Mammary epithelial cell (primary cell): ENCODE measurements at regions of chr17 and their contacts with region 1.

Region 1: GRCh38 chr17:12591021-12591735 is 74.5 kb upstream of the MYOCD start:
- DNase-seq: no peak
- H3K4me3 ChIP-seq: no peak overlapping the region
- H3K27ac ChIP-seq: no peak overlapping the region
- H3K4me1 ChIP-seq: no peaks in the 10 kb centered on the region
- H3K27me3 ChIP-seq: no peaks in the 10 kb centered on the region
- CTCF ChIP-seq: no peak

Region 2: GRCh38 chr17:12472252-12473173 is 118.7 kb before region 1 on chr17:
- CTCF ChIA-PET with region 1: no interaction called
- dilution Hi-C with region 1: no loop called
- in situ Hi-C with region 1: no loop called
- intact Hi-C with region 1: no loop called
- DNase-seq: no peak
- H3K4me3 ChIP-seq: no peak overlapping the region
- H3K27ac ChIP-seq: no peak overlapping the region
- H3K4me1 ChIP-seq: no peaks in the 10 kb centered on the region
- H3K27me3 ChIP-seq: no peaks in the 10 kb centered on the region
- CTCF ChIP-seq: no peak

Region 3: DNA sequence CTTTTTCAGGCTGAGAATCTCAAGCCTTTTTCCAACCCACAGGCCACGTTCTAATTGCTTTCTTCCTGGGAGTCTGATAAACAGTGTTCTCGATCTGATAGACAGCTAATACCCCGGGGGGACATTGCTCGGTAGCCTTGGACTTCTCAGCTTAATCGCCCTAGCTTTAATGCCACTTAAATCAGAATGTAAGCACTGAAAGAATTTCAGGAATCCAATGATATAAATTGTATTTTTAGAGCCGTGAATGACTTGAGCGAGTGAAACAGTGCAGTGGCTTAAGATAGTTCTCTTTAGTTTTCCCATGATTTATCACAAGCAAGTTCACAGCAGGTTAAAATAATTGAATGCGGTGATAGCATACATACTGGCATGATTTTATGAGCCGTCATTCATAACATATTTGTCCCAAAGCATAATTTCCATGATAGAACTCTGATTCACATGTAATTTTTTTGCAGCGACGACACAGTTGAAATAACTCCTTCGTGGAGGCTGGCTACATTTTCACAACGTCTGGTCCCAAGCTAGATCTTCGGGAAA is 41.6 kb before region 1 on chr17:
- CTCF ChIA-PET with region 1: no interaction called
- dilution Hi-C with region 1: loop called (anchors 5 kb)
- in situ Hi-C with region 1: no loop called
- intact Hi-C with region 1: no loop called
- DNase-seq: no peak
- H3K4me3 ChIP-seq: no peak overlapping the region
- H3K27ac ChIP-seq: no peak overlapping the region
- H3K4me1 ChIP-seq: no peaks in the 10 kb centered on the region
- H3K27me3 ChIP-seq: no peaks in the 10 kb centered on the region
- CTCF ChIP-seq: no peak

Region 4: GRCh38 chr17:12859520-12859919 is 268.3 kb after region 1 on chr17:
- CTCF ChIA-PET with region 1: no interaction called
- dilution Hi-C with region 1: no loop called
- in situ Hi-C with region 1: no loop called
- intact Hi-C with region 1: no loop called
- DNase-seq: no peak
- H3K4me3 ChIP-seq: no peak overlapping the region
- H3K27ac ChIP-seq: no peak overlapping the region
- H3K4me1 ChIP-seq: no peaks in the 10 kb centered on the region
- H3K27me3 ChIP-seq: no peaks in the 10 kb centered on the region
- CTCF ChIP-seq: no peak